ENCODE measurements at regions of chr12 and their contacts with region 1.

Region 1: DNA sequence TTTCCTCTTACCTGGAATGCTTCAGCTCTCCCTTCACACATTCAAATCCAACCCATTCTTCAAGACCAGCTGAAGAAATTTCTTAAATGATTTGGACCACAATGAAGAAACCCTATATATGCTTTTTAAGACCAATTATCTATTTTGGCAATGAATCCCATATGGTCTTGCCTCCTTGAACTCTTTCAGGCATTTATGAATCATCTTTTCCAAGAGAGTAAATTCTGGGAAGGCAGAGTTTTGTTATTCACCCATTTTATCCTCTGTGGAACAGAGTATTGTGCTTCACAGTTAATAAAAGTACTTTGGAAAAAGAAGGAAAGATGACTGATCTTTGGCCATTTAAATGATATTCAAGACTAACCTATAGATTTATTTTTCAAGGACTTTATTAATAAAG is 14.0 kb downstream of the GIT2 start:
- DNase-seq: no peak
- ATAC-seq: no peak
- H3K4me3 Mint-ChIP-seq: peak overlapping the region; percentile 34
- H3K27ac Mint-ChIP-seq: peak overlapping the region; percentile 66
- H3K4me1 Mint-ChIP-seq: peaks cover 30% of the 10 kb centered on the region
- H3K27me3 Mint-ChIP-seq: no peaks in the 10 kb centered on the region

Region 2: DNA sequence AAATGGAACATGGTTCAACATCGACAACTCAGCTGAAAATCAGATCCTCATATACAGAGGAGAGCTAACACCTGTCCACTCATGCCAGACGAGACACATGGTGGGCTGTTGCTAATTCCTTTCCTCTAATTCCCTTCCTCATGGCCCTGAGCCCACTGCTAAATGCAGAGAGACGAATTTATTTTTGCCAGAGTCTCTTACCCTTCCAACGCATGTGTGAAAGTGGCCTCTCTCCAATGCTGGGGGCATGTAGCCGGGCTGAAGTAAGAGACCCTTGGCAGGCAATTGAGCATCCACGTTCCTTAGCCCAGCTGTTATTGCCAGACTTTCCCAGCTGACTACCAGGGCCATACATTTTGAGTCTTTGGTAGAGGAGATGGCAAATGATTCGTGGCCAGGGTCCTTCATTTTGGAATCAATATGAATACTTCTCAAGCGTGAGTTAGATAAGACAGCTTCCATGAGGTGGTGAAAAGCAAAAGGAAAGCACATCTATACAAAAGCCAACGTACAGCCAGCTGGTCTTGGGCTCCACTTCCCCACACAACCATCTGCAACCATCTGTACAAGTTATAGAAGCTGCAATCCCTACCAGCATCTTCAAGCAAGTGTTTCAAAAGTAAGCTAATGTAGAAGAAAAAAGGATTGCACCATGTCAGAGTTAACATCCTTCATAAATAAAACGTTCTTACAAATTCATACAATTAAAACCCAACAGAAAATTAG is 1279.5 kb before region 1 on chr12:
- POLR2A ChIA-PET with region 1: interaction called, 10 read pairs
- DNase-seq: no peak
- ATAC-seq: no peak
- H3K4me3 Mint-ChIP-seq: no peak overlapping the region
- H3K27ac Mint-ChIP-seq: no peak overlapping the region
- H3K4me1 Mint-ChIP-seq: peaks cover 17% of the 10 kb centered on the region
- H3K27me3 Mint-ChIP-seq: no peaks in the 10 kb centered on the region

Region 3: DNA sequence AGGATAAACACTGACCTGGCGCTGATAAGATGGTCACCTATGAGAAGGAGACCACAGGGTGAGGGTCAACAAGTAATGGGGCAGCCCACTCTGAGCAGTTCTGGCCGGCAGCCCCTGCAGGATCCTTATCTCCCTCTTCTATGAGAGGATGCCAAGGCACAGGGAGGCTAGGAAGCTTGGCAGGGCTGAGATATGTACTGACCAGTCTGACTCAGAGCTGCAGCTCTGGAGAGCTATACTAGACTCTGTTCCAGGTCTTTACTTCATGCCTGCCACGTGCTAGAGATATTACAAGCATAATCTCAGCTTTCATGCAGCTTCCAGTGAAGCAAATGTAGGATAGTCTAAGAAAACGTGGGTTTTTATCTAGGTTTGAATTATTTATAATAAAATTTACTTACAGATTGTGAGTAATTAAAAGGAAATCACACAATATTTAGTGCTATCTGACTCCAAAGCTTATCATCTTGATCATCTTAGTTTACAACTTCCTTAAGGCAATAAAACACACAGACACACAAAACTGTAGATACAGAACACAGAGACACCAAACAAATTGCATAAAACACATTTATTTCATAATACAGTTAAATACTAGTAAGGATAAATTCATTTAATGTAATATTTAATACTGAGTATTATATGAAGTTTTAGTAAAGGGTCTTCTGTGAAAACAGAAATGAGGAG is 18.3 kb before region 1 on chr12:
- POLR2A ChIA-PET with region 1: no interaction called
- DNase-seq: no peak
- ATAC-seq: no peak
- H3K4me3 Mint-ChIP-seq: no peak overlapping the region
- H3K27ac Mint-ChIP-seq: no peak overlapping the region
- H3K4me1 Mint-ChIP-seq: peaks cover 9% of the 10 kb centered on the region
- H3K27me3 Mint-ChIP-seq: no peaks in the 10 kb centered on the region

Region 4: GRCh38 chr12:110005319-110005973 is 23.2 kb after region 1 on chr12:
- POLR2A ChIA-PET with region 1: no interaction called
- DNase-seq: no peak
- ATAC-seq: peak; percentile 71
- H3K4me3 Mint-ChIP-seq: peak overlapping the region; percentile 70
- H3K27ac Mint-ChIP-seq: peak overlapping the region; percentile 82
- H3K4me1 Mint-ChIP-seq: peaks cover 51% of the 10 kb centered on the region
- H3K27me3 Mint-ChIP-seq: no peaks in the 10 kb centered on the region

Measured in activated naive CD8-positive, alpha-beta T cell treated with anti-CD3 and anti-CD28 coated beads, Interleukin-2, amount 10 ng/mL, durations not matched to agents 7 days and 5 days (primary cell).